Testis (tissue), 5 donors: ENCODE measurements at regions of chr2 and their contacts with region 1.

Region 1: GRCh38 chr2:38581193-38582147 is 21.3 kb downstream of the HNRNPLL start:
- DNase-seq: peak; percentile 85
- H3K4me3 ChIP-seq: no peak overlapping the region
- H3K27ac ChIP-seq: no peak overlapping the region
- H3K4me1 ChIP-seq: peaks cover 4% of the 10 kb centered on the region
- H3K27me3 ChIP-seq: no peaks in the 10 kb centered on the region
- CTCF ChIP-seq: peak; percentile 73 to 77 (median 74)
- POLR2A ChIP-seq: no peak

Region 2: GRCh38 chr2:38362232-38362631 is 219.2 kb before region 1 on chr2:
- intact Hi-C with region 1: no loop called
- DNase-seq: no peak
- H3K4me3 ChIP-seq: no peak overlapping the region
- H3K27ac ChIP-seq: no peak overlapping the region
- H3K4me1 ChIP-seq: peaks cover 4% of the 10 kb centered on the region
- H3K27me3 ChIP-seq: no peaks in the 10 kb centered on the region
- CTCF ChIP-seq: no peak
- POLR2A ChIP-seq: no peak

Region 3: DNA sequence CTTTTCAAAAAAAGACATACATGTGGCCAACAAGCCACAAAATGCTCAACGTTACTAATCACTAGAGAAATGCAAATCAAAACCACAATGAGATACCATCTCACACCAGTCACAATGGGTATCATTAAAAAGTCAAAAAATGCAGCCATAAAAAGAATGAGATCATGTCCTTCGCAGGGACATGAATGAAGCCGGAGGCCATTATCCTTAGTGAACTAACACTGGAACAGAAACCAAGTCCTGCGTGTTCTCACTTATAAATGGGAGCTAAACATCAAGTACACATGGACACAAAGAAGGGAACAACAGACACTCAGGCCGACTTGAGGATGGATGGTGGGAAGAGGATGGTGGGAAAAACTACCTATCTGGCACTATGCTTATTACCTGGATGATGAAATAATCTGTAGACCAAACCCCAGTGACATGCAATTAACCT is 186.5 kb before region 1 on chr2:
- intact Hi-C with region 1: no loop called
- DNase-seq: no peak
- H3K4me3 ChIP-seq: no peak overlapping the region
- H3K27ac ChIP-seq: no peak overlapping the region
- H3K4me1 ChIP-seq: no peaks in the 10 kb centered on the region
- H3K27me3 ChIP-seq: no peaks in the 10 kb centered on the region
- CTCF ChIP-seq: no peak
- POLR2A ChIP-seq: no peak

Region 4: DNA sequence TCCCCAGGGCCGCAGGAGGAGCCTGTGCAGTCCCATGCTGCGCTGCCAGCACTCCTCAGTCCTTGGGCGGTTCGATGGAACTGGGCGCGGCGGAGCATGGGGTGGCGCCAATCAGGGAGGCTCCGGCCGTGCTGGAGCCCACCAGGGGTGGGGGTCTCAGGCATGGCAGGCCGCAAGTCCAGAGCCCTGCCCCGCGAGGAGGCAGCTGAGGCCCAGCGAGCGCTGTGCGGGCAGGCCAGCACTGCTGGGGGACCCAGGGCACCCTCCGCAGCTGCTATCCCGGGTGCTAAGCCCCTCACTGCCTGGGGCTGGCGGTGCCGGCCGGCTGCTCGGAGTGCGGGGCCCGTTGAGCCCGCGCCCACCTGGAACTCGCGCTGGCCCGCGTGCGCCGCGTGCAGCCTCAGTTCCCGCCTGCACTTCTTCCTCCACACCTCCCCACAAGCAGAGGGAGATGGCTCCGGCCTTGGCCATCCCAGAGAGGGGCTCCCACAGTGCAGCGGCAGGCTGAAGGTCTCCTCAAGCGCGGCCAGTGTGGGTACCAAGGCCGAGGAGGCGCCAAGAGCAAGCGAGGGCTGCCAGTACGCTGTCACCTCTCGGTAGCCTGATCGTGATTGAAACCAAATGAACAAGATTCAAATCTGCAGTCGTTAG is 61.7 kb after region 1 on chr2:
- intact Hi-C with region 1: no loop called
- DNase-seq: no peak
- H3K4me3 ChIP-seq: peak overlapping the region; percentile 29 to 49
- H3K27ac ChIP-seq: no peak overlapping the region
- H3K4me1 ChIP-seq: no peaks in the 10 kb centered on the region
- H3K27me3 ChIP-seq: no peaks in the 10 kb centered on the region
- CTCF ChIP-seq: no peak
- POLR2A ChIP-seq: no peak

Region 5: DNA sequence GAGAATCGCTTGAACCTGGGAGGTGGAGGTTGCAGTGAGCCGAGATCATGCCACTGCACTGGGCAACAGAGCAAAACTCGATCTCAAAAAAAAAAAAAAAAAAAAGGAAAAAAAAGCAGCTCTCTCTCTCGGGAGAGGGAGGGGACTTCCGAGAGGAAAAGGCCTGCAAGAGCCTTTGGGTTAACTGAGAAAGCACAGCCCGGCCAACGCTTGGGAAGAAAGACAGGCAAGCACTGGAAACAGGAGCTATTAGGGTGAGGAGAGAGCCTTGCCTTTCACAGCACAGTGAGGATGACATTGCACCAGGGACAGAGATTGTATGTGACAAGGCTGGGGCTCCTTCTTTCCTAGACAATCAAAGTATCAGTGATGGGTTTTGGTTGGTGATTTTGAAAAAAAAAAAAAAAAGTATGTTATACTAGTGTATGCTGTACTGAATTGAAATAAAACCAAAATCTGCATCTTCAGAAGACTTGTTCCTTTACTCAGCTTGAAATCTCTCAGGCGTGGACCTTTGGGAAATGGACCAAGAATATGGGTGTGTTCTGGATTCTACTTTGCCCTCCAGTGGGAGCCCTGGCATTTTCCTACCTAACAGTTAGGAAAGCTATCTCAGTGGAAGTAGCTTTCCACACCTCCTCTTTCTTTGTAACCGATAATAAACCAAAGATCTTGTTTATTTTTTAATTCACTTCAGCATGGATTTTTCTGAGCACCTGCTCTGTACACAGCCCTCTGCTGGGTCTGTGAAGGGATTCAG is 153.0 kb after region 1 on chr2:
- intact Hi-C with region 1: loop called (anchors 10 kb)
- DNase-seq: no peak
- H3K4me3 ChIP-seq: no peak overlapping the region
- H3K27ac ChIP-seq: no peak overlapping the region
- H3K4me1 ChIP-seq: peaks cover 15% of the 10 kb centered on the region
- H3K27me3 ChIP-seq: no peaks in the 10 kb centered on the region
- CTCF ChIP-seq: no peak
- POLR2A ChIP-seq: no peak